IMR-90 (cell line): ENCODE measurements at regions of chr1 and their contacts with region 1.

Region 1: GRCh38 chr1:170410401-170411166 is 121.4 kb upstream of the GORAB start:
- DNase-seq: peak; percentile 86
- ATAC-seq: peak; percentile 78
- H3K4me3 ChIP-seq: no peak overlapping the region
- H3K27ac ChIP-seq: peak overlapping the region; percentile 95; the same call in 1 of the 2 replicates
- H3K4me1 ChIP-seq: peaks cover 8% of the 10 kb centered on the region
- H3K27me3 ChIP-seq: no peaks in the 10 kb centered on the region
- CTCF ChIP-seq: no peak
- POLR2A ChIP-seq: no peak
- RAD21 ChIP-seq: no peak

Region 2: GRCh38 chr1:170377896-170378634 is 32.5 kb before region 1 on chr1:
- CTCF ChIA-PET with region 1: no interaction called
- POLR2A ChIA-PET with region 1: no interaction called
- dilution Hi-C with region 1: no loop called
- in situ Hi-C with region 1: no loop called
- intact Hi-C with region 1: loop called (anchors 5 kb)
- DNase-seq: no peak
- ATAC-seq: no peak
- H3K4me3 ChIP-seq: no peak overlapping the region
- H3K27ac ChIP-seq: no peak overlapping the region
- H3K4me1 ChIP-seq: peaks cover 12% of the 10 kb centered on the region
- H3K27me3 ChIP-seq: no peaks in the 10 kb centered on the region
- CTCF ChIP-seq: no peak
- POLR2A ChIP-seq: no peak
- RAD21 ChIP-seq: no peak

Region 3: GRCh38 chr1:170426596-170426995 is 16.0 kb after region 1 on chr1:
- CTCF ChIA-PET with region 1: no interaction called
- POLR2A ChIA-PET with region 1: no interaction called
- dilution Hi-C with region 1: no loop called
- in situ Hi-C with region 1: no loop called
- intact Hi-C with region 1: no loop called
- DNase-seq: no peak
- ATAC-seq: no peak
- H3K4me3 ChIP-seq: no peak overlapping the region
- H3K27ac ChIP-seq: no peak overlapping the region
- H3K4me1 ChIP-seq: 0 out of 2 replicates have a peak, but pooled peaks cover 1% of the 10 kb centered on the region
- H3K27me3 ChIP-seq: no peaks in the 10 kb centered on the region
- CTCF ChIP-seq: no peak
- POLR2A ChIP-seq: no peak
- RAD21 ChIP-seq: no peak

Region 4: GRCh38 chr1:170494369-170494768 is 83.8 kb after region 1 on chr1:
- CTCF ChIA-PET with region 1: no interaction called
- POLR2A ChIA-PET with region 1: no interaction called
- dilution Hi-C with region 1: no loop called
- in situ Hi-C with region 1: no loop called
- intact Hi-C with region 1: no loop called
- DNase-seq: peak; percentile 45
- ATAC-seq: no peak
- H3K4me3 ChIP-seq: no peak overlapping the region
- H3K27ac ChIP-seq: no peak overlapping the region
- H3K4me1 ChIP-seq: peaks cover 2% of the 10 kb centered on the region; the same call in 1 of the 2 replicates
- H3K27me3 ChIP-seq: no peaks in the 10 kb centered on the region
- CTCF ChIP-seq: no peak
- POLR2A ChIP-seq: no peak
- RAD21 ChIP-seq: no peak